Endothelial cell of umbilical vein (primary cell): ENCODE measurements at regions of chr10 and their contacts with region 1.

Region 1: DNA sequence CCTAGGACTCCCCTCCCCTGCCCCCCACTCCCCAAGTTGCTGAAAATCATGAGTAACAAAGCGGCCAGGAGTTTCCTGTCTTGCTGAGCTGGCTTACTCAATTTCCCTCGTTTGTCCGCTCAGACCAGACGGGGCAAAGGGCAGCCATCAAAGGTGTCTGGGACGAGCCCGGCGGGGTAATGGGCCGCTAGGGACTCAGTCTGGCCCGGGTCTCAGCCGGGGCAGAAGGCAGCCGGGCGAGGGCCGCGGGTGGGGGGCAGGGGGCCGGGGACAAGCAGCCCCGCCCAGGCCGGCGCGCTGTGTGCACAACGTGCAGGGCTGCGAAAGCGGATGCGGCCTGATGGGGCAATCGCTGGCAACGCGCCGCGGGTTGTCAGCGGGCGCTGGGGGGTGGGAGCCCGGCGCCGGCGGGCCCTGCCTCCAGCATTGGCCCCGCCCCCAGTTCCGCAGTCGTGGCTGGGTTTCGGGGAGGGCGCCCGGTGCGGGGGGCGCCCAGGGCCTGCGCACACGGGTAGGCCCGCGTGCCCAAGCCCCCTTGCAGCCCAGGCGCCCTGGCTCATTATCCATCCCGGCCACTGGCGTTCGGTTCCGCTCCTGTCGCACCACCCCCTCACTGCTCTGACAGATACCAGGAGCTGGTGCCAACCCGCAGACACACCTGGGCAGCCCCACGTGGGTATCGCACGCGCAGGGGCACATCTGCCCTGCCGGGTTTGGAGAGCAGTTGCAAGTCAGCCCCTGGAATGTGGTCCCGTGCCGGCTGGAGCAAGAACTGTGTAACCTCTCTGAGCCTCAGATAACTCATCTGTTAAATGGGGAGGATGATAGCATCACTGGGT is 35.1 kb downstream of the DNAJB12 start:
- DNase-seq: peak; percentile 98
- H3K4me3 ChIP-seq: no peak overlapping the region
- H3K27ac ChIP-seq: peak overlapping the region; percentile 100
- H3K4me1 ChIP-seq: peaks cover 69% of the 10 kb centered on the region
- H3K27me3 ChIP-seq: no peaks in the 10 kb centered on the region
- CTCF ChIP-seq: no peak
- POLR2A ChIP-seq: no peak

Region 2: DNA sequence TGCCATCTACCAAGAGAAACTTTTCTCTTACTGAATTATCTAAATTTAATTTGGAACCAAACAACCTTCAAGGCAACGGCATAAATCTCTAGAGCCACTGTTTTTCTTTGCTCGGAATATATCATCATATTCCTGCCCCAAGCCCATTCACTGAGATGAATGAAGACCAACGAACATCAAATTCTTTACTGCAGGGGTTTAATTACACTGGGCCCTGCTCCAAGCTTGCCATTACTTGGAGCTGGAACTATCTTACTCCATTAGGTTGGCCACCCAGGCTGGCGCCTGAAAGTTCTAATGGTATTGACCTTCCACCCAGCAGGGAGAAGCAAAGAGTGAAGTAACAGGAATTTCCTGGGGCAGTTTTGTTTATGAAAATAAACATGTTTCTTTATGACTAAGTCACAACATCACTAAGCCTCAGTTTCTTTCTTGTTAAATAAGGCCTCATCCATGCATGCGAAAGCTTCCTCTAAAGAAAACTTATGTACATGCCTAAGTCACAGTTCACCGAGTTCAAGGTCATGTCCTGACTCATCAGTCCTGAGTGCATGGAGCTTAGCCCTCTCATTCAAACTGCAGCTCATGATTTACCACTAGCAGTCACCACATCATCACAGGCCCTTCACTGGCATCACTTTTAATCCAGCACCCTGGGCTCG is 145.9 kb before region 1 on chr10:
- CTCF ChIA-PET with region 1: no interaction called
- POLR2A ChIA-PET with region 1: no interaction called
- dilution Hi-C with region 1: no loop called
- intact Hi-C with region 1: loop called (anchors 5 kb)
- DNase-seq: no peak
- H3K4me3 ChIP-seq: no peak overlapping the region
- H3K27ac ChIP-seq: no peak overlapping the region
- H3K4me1 ChIP-seq: peaks cover 42% of the 10 kb centered on the region
- H3K27me3 ChIP-seq: no peaks in the 10 kb centered on the region
- CTCF ChIP-seq: no peak
- POLR2A ChIP-seq: no peak

Region 3: GRCh38 chr10:72223743-72224101 is 95.9 kb before region 1 on chr10:
- CTCF ChIA-PET with region 1: interaction called, 12 read pairs
- POLR2A ChIA-PET with region 1: no interaction called
- dilution Hi-C with region 1: no loop called
- intact Hi-C with region 1: loop called (anchors 2 kb)
- DNase-seq: peak; percentile 59
- H3K4me3 ChIP-seq: no peak overlapping the region
- H3K27ac ChIP-seq: peak overlapping the region; percentile 67
- H3K4me1 ChIP-seq: peaks cover 11% of the 10 kb centered on the region
- H3K27me3 ChIP-seq: no peaks in the 10 kb centered on the region
- CTCF ChIP-seq: no peak
- POLR2A ChIP-seq: no peak

Region 4: DNA sequence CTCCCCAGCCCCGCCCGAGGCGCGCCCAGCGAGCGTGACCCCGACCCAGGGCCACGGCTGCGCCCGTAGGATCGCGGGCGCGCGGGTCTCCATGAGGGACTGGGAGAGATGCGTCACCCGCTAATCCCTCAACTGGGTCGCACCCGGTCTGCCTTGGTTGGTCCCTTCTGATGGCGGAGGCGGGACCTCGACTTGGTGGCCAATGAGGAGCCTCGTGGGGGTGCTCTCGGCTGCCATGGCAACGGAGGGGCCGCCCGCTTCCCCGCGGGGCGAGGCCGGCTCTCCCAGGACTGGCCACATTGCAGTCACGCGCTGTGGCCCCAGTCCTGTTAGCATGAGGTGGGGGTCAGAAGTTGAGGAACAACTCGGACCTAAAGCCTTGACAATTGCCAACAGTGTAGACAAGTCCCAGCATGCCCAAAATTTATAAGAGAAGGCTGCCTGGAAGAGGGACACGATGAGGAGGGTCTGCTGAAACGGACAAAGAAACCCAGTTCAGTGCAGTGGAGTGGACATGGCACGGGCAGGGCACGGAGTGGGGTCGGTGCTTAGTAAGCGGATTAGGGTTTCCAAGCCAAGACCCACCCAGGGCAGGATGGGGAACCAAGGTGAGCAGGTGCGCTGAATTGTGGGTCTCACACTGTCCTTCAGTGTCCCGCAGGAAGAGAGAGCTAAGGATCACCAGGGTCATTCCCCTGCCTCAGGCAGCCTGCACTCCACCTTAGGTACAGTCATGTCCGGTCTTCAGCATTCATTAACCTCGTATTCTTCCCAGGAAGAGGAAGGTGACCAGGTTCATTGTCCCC is 21.5 kb before region 1 on chr10:
- CTCF ChIA-PET with region 1: interaction called, 6 read pairs
- POLR2A ChIA-PET with region 1: interaction called, 9 read pairs
- dilution Hi-C with region 1: no loop called
- intact Hi-C with region 1: loop called (anchors 1 kb)
- DNase-seq: peak; percentile 97
- H3K4me3 ChIP-seq: peak overlapping the region in 2 of 3 experiments; percentile 34 to 44
- H3K27ac ChIP-seq: peak overlapping the region; percentile 88
- H3K4me1 ChIP-seq: peaks cover 15% of the 10 kb centered on the region
- H3K27me3 ChIP-seq: no peaks in the 10 kb centered on the region
- CTCF ChIP-seq: no peak
- POLR2A ChIP-seq: no peak

Region 5: GRCh38 chr10:72331601-72332422 is 12.2 kb after region 1 on chr10:
- CTCF ChIA-PET with region 1: interaction called, 7 read pairs
- POLR2A ChIA-PET with region 1: interaction called, 3 read pairs
- dilution Hi-C with region 1: no loop called
- intact Hi-C with region 1: loop called (anchors 1 kb)
- DNase-seq: peak; percentile 86
- H3K4me3 ChIP-seq: no peak overlapping the region
- H3K27ac ChIP-seq: peak overlapping the region; percentile 75
- H3K4me1 ChIP-seq: peaks cover 58% of the 10 kb centered on the region
- H3K27me3 ChIP-seq: no peaks in the 10 kb centered on the region
- CTCF ChIP-seq: peak; percentile 20 to 59
- POLR2A ChIP-seq: no peak

Region 6: GRCh38 chr10:72354478-72355213 is 35.0 kb after region 1 on chr10 and contains the start of gene DNAJB12:
- CTCF ChIA-PET with region 1: no interaction called
- POLR2A ChIA-PET with region 1: no interaction called
- dilution Hi-C with region 1: no loop called
- intact Hi-C with region 1: no loop called
- DNase-seq: peak; percentile 95
- H3K4me3 ChIP-seq: peak within 1 kb of the TSS; percentile 66 to 80 (median 69)
- H3K27ac ChIP-seq: peak within 1 kb of the TSS; percentile 89
- H3K4me1 ChIP-seq: peaks cover 14% of the 10 kb centered on the region
- H3K27me3 ChIP-seq: no peaks in the 10 kb centered on the region
- CTCF ChIP-seq: no peak
- POLR2A ChIP-seq: peak; percentile 71
- total RNA-seq, gene DNAJB12: 44.2 and 45.2 TPM in 2 replicates